ENCODE measurements at regions of chr12 and their contacts with region 1.

Region 1: GRCh38 chr12:74770552-74770951 is 232.9 kb downstream of the ATXN7L3B start:
- DNase-seq: no peak
- H3K4me3 ChIP-seq: no peak overlapping the region
- H3K27ac ChIP-seq: no peak overlapping the region
- H3K4me1 ChIP-seq: no peaks in the 10 kb centered on the region
- H3K27me3 ChIP-seq: no peaks in the 10 kb centered on the region
- CTCF ChIP-seq: no peak

Region 2: DNA sequence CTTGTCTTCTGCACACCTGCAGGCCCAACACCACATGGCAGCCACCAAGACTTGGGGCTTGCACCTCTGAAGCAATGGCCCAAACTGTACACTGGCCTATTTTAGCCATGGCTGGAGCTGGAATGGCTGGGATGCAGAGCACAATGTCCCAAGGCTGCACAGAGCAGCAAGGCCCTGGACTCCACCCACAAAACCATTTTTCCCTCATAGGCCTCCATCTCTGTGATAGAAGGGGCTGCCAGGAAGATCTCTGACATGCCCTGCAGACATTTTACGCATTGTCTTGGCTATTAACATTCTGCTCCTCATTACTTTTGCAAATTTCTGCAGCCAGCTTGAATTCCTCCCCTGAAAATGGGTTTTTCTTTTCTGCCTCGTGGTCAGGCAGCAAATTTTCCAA is 210.8 kb before region 1 on chr12:
- intact Hi-C with region 1: loop called (anchors 5 kb)
- DNase-seq: no peak
- H3K4me3 ChIP-seq: no peak overlapping the region
- H3K27ac ChIP-seq: no peak overlapping the region
- H3K4me1 ChIP-seq: no peaks in the 10 kb centered on the region
- H3K27me3 ChIP-seq: no peaks in the 10 kb centered on the region
- CTCF ChIP-seq: no peak